ENCODE measurements at regions of chr1 and their contacts with region 1.

Region 1: DNA sequence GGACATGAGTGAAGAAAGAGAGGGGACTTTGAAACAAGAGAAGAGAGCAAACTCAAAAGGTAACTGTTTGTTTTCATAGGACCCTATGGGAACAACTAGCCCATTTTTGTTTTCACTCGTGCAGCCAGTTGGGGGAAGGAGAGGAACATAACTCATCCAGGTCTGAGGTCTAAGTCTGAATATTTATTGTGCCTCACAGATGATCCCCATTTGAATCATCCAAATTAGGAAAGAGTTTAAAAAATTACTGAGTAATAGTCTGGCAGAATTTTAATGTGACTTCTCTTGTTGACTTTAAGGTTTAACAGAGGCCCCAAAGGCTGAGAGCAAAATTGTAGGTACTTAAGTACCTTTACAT is 10.4 kb upstream of the TSPAN2 start:
- DNase-seq: no peak
- H3K4me3 ChIP-seq: peak overlapping the region; percentile 18
- H3K27ac ChIP-seq: no peak overlapping the region
- H3K4me1 ChIP-seq: no peaks in the 10 kb centered on the region
- H3K27me3 ChIP-seq: no peaks in the 10 kb centered on the region
- CTCF ChIP-seq: no peak
- EP300 ChIP-seq: no peak
- POLR2A ChIP-seq: no peak

Region 2: GRCh38 chr1:114511032-114511785 is 588.5 kb before region 1 on chr1 and contains the start of gene TRIM33:
- intact Hi-C with region 1: loop called in 1 of 4 experiments (anchors 5 kb)
- DNase-seq: peak; percentile 85 to 95 (median 89)
- H3K4me3 ChIP-seq: peak within 1 kb of the TSS; percentile 81
- H3K27ac ChIP-seq: peak within 1 kb of the TSS; percentile 91 to 99
- H3K4me1 ChIP-seq: peaks cover 6% of the 10 kb centered on the region
- H3K27me3 ChIP-seq: no peaks in the 10 kb centered on the region
- CTCF ChIP-seq: peak in 1 of 3 donors; percentile 8
- EP300 ChIP-seq: no peak
- POLR2A ChIP-seq: peak; percentile 63
- total RNA-seq, gene TRIM33: 31.2 to 49.6 (median 38.5) TPM

Measured in ovary (tissue), 10 donors.